ENCODE measurements at regions of chr1 and their contacts with region 1.

Region 1: GRCh38 chr1:160777486-160778089 is 18.4 kb upstream of the LY9 start:
- DNase-seq: peak; percentile 66
- ATAC-seq: peak; percentile 76
- H3K4me3 Mint-ChIP-seq: no peak overlapping the region
- H3K27ac Mint-ChIP-seq: peak overlapping the region; percentile 26
- H3K4me1 Mint-ChIP-seq: peaks cover 40% of the 10 kb centered on the region
- H3K27me3 Mint-ChIP-seq: no peaks in the 10 kb centered on the region

Region 2: GRCh38 chr1:160806109-160806665 is 28.6 kb after region 1 on chr1:
- CTCF ChIA-PET with region 1: interaction called, 17 read pairs
- POLR2A ChIA-PET with region 1: no interaction called
- DNase-seq: no peak
- ATAC-seq: no peak
- H3K4me3 Mint-ChIP-seq: no peak overlapping the region
- H3K27ac Mint-ChIP-seq: no peak overlapping the region
- H3K4me1 Mint-ChIP-seq: peaks cover 24% of the 10 kb centered on the region
- H3K27me3 Mint-ChIP-seq: no peaks in the 10 kb centered on the region

Region 3: GRCh38 chr1:160830321-160831153 is 52.9 kb after region 1 on chr1:
- CTCF ChIA-PET with region 1: interaction called, 80 read pairs
- POLR2A ChIA-PET with region 1: interaction called, 3 read pairs
- DNase-seq: peak; percentile 87
- ATAC-seq: peak; percentile 83
- H3K4me3 Mint-ChIP-seq: no peak overlapping the region
- H3K27ac Mint-ChIP-seq: no peak overlapping the region
- H3K4me1 Mint-ChIP-seq: peaks cover 40% of the 10 kb centered on the region
- H3K27me3 Mint-ChIP-seq: no peaks in the 10 kb centered on the region